Activated CD8-positive, alpha-beta memory T cell treated with anti-CD3 and anti-CD28 coated beads, Interleukin-2, amount 10 ng/mL, durations not matched to agents 7 days and 5 days (primary cell): ENCODE measurements at regions of chr14 and their contacts with region 1.

Region 1: DNA sequence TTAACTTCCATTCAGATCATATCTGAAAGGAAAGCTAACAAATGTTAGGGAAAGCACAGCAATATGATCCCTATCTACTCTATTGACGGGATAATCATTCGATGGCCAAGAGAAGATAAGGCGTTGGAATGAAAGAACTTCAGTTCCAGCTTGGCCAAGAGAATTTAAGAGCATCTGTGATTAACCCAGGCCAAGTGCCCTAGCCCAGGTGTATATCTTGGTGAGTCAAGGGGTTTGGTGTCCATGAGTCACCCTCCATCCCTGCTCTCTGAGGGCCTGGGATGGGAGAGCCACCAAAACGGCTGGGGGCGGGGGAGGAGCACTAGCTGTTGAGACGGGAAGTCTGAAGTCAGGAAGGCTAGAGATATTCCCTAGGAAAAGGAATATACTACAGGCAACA is 13.0 kb downstream of the TBPL2 start:
- DNase-seq: no peak
- ATAC-seq: no peak
- H3K4me3 Mint-ChIP-seq: no peak overlapping the region
- H3K27ac Mint-ChIP-seq: no peak overlapping the region
- H3K4me1 Mint-ChIP-seq: peaks cover 3% of the 10 kb centered on the region
- H3K27me3 Mint-ChIP-seq: no peaks in the 10 kb centered on the region

Region 2: DNA sequence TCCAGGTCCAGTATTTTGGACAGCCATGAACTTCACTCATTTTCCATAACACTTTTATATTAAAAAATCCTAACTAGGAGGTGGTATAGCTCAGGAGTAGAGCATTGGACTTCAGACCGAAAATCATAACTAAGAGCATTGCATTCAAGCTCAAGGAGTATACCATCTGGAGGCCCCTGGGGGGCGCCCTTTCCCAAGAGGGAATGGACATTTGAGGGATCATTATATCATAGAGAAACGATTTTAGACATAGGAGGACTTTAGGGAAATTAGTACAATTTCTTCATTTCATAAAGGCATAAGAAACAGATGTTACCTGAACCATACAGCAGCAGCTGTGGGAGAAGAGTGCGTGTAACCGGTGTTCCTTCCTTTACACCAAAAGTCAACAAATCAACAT is 10.5 kb before region 1 on chr14:
- CTCF ChIA-PET with region 1: interaction called, 28 read pairs
- DNase-seq: no peak
- ATAC-seq: no peak
- H3K4me3 Mint-ChIP-seq: no peak overlapping the region
- H3K27ac Mint-ChIP-seq: no peak overlapping the region
- H3K4me1 Mint-ChIP-seq: peaks cover 19% of the 10 kb centered on the region
- H3K27me3 Mint-ChIP-seq: peaks cover 3% of the 10 kb centered on the region